Activated naive CD4-positive, alpha-beta T cell treated with anti-CD3 and anti-CD28 coated beads for 36 hours (primary cell): ENCODE measurements at regions of chr5 and their contacts with region 1.

Region 1: DNA sequence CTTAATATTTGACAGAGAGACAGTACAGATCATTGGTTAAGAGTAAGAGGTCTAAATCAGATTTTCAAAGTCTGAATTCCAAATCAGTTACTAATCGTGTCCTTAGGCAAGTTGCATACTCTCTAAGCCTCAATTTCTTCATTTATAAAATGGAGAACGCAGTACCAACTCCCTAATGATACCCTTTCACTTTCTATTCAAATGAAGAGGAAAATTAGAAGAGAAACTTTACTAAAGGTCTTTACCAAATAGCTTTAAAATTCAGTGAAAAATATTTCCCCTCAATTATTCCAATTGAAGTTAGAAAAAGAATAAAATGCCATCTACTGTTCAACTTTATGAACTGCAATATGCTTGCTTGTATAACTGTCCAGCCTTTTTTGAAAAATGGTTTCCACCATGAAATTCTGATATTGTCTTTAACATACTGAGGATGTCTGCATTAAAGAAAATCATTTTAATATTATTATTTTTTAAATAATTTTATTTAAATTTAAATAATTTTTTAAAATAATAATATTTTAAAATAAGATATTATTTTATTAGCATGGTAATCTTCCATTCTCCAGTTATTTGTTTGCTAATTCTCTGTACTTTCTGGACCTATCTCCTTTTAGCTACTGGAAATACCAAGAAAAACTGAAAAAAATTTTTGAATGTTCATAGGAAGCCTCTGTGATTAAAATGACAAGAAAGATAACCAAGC is 36.0 kb downstream of the POC5 start:
- DNase-seq: no peak
- H3K4me3 Mint-ChIP-seq: no peak overlapping the region
- H3K27ac Mint-ChIP-seq: no peak overlapping the region
- H3K4me1 Mint-ChIP-seq: peaks cover 12% of the 10 kb centered on the region
- H3K27me3 Mint-ChIP-seq: no peaks in the 10 kb centered on the region

Region 2: DNA sequence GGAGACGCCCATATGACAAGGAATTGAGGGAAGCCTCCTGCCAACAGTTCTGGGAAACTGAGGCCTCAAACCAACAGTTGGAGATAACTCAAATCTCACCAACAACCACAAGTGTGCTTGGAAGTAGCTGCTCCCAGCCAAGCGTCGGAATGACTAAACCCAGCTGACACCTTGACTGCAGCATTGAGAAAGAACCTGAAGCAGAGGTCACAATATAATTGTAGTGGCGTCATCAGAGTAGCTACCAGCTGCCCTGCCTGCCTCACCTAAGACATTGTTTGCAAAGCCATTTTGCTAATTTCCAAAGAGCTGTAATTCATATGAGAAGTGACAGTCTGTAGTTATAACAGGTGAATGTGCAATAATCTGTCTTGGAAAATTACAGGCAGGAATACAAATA is 403.8 kb before region 1 on chr5:
- CTCF ChIA-PET with region 1: no interaction called
- intact Hi-C with region 1: loop called (anchors 5 kb)
- DNase-seq: no peak
- H3K4me3 Mint-ChIP-seq: no peak overlapping the region
- H3K27ac Mint-ChIP-seq: no peak overlapping the region
- H3K4me1 Mint-ChIP-seq: no peaks in the 10 kb centered on the region
- H3K27me3 Mint-ChIP-seq: no peaks in the 10 kb centered on the region

Region 3: DNA sequence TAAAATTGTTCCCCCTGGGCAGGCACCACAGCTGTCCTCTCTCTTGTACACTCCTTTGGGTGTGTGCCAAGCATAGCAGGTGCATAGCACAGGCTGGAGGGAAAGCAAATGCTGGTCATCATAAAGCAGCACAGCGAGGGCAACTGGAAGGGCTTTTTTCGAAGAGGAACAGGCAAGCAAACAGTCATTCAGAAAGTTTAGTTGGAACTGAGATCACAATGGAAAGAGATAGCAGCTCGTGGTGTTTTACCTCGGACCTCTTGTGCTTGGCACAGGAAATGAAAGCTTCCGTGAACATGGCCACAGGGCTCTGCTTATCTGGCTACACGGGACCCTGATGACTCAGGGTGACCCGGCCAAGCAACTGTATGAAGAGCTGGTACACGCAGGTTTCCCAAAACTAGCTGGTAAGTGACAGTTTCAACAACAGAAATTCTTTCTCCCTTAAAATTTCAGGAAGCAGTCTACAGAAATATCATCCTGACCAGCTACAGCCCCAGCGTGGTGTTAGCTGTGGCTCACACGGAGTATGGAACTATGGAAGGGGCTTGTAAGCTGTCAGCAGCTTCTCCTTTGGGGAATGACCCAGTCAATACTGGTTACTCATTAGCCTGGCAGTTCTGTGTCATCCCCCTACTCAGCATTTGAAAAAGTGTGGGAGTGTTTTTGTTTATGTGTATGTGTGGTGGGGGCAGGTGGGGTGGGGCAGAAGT is 12.1 kb before region 1 on chr5:
- CTCF ChIA-PET with region 1: interaction called, 4 read pairs
- intact Hi-C with region 1: loop called (anchors 1 kb)
- DNase-seq: peak; percentile 82
- H3K4me3 Mint-ChIP-seq: peak overlapping the region; percentile 49
- H3K27ac Mint-ChIP-seq: peak overlapping the region; percentile 70
- H3K4me1 Mint-ChIP-seq: peaks cover 30% of the 10 kb centered on the region
- H3K27me3 Mint-ChIP-seq: no peaks in the 10 kb centered on the region

Region 4: DNA sequence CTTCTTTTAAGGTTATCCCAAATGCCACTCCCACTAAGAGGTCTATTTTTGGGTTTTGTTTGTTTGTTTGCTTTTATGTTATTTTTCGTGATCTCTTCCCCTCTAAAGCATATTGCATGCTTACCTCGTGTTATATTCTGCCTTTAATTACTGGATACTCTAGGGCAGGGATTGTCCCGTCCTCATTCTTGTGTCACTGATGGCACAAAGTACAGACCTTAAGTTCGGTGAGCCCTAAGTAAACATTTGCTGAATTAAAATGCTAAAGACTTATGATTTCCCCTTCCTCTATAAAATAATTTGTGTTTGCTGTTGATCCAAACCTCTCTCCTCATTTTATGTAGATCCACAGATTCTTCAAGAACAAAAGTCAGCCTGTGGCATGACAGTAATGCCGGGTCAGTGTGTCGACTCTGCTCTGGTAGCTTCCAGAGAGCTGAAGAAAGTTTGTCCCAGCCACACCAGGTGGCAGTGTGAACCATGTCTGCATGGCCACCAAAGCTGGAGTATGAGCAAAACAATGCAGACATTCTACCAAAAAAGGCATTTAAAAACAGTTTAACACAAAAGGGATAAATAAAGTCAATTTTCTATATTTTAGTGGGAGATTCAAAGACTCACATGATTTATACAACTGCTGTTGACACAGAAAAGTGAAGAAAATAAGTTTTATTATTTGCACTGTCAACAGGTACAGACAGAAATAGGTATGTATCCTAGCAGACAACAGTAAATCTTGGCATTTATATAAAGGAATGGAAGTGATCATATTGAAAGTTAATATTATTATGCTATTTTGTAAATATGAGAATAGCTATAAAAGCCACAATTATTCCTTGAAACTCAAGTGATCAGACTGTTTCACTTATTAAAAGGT is 53.9 kb after region 1 on chr5:
- CTCF ChIA-PET with region 1: no interaction called
- intact Hi-C with region 1: no loop called
- DNase-seq: peak; percentile 46
- H3K4me3 Mint-ChIP-seq: no peak overlapping the region
- H3K27ac Mint-ChIP-seq: no peak overlapping the region
- H3K4me1 Mint-ChIP-seq: no peaks in the 10 kb centered on the region
- H3K27me3 Mint-ChIP-seq: peaks cover 2% of the 10 kb centered on the region